Colonic mucosa (tissue), 4 donors: ENCODE measurements at regions of chr19 and their contacts with region 1.

Region 1: GRCh38 chr19:11293433-11294389 is 2.2 kb upstream of the TSPAN16 start:
- DNase-seq: peak; percentile 95
- H3K4me3 ChIP-seq: peak overlapping the region; percentile 19
- H3K27ac ChIP-seq: no peak overlapping the region
- H3K4me1 ChIP-seq: no peaks in the 10 kb centered on the region
- H3K27me3 ChIP-seq: no peaks in the 10 kb centered on the region
- CTCF ChIP-seq: peak; percentile 98

Region 2: DNA sequence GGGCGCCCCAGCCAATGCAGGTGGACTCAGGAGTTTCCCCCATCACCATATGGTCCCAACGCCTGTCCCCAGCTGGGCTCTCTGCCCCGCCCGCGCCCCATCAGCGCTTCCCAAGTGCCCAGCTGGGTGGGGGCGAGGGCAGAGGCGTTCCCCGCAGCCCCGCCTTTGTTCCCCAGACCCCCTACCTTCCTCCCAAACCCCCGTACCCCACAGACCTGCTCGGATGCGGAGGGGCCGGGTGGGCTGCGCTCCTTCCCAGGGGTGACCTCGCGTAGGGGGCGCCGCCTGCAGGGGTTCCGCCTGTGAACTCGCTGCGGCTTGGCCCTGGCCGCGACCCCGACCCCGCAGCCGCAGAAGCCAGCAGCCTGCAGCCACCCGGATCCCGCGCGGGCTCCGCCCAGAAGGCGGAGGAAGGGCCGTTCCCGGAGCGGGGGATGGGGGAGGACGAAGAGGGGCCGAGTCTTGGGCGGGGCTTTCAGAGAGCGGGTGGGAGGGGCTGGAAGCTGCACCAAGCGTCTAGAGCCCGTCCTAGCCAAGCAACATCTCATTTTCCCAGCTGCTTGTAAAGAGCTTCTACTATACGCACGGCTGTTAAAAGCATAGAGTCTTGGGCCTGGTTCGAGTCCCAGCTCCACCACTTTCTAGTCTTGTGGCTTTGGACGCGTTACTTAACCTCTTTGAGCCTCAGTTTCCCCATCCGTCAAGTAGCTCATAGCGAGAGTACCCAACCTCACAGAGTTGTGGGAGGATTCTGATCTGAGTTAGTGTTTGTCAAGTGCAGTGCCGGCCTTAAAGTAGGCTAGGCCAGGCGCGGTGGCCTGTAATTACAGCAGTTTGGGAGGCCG is 45.8 kb after region 1 on chr19 and contains the start of gene RAB3D:
- intact Hi-C with region 1: no loop called
- DNase-seq: peak; percentile 97
- H3K4me3 ChIP-seq: peak within 1 kb of the TSS; percentile 65
- H3K27ac ChIP-seq: peak within 1 kb of the TSS; percentile 60
- H3K4me1 ChIP-seq: peaks cover 6% of the 10 kb centered on the region
- H3K27me3 ChIP-seq: no peaks in the 10 kb centered on the region
- CTCF ChIP-seq: no peak
- total RNA-seq, gene RAB3D: 47.7 to 54.0 TPM

Region 3: GRCh38 chr19:11380653-11381534 is 87.2 kb after region 1 on chr19:
- intact Hi-C with region 1: loop called (anchors 5 kb)
- DNase-seq: peak; percentile 98
- H3K4me3 ChIP-seq: peak overlapping the region; percentile 65
- H3K27ac ChIP-seq: peak overlapping the region; percentile 82
- H3K4me1 ChIP-seq: peaks cover 11% of the 10 kb centered on the region
- H3K27me3 ChIP-seq: no peaks in the 10 kb centered on the region
- CTCF ChIP-seq: peak; percentile 75